Activated CD4-positive, alpha-beta memory T cell treated with anti-CD3 and anti-CD28 coated beads for 36 hours (primary cell): ENCODE measurements at regions of chr12 and their contacts with region 1.

Region 1: GRCh38 chr12:47812797-47813510 is 6.7 kb downstream of the HDAC7 start:
- DNase-seq: peak; percentile 98
- H3K4me3 Mint-ChIP-seq: peak overlapping the region; percentile 92
- H3K27ac Mint-ChIP-seq: peak overlapping the region; percentile 99
- H3K4me1 Mint-ChIP-seq: peaks cover 82% of the 10 kb centered on the region
- H3K27me3 Mint-ChIP-seq: no peaks in the 10 kb centered on the region

Region 2: DNA sequence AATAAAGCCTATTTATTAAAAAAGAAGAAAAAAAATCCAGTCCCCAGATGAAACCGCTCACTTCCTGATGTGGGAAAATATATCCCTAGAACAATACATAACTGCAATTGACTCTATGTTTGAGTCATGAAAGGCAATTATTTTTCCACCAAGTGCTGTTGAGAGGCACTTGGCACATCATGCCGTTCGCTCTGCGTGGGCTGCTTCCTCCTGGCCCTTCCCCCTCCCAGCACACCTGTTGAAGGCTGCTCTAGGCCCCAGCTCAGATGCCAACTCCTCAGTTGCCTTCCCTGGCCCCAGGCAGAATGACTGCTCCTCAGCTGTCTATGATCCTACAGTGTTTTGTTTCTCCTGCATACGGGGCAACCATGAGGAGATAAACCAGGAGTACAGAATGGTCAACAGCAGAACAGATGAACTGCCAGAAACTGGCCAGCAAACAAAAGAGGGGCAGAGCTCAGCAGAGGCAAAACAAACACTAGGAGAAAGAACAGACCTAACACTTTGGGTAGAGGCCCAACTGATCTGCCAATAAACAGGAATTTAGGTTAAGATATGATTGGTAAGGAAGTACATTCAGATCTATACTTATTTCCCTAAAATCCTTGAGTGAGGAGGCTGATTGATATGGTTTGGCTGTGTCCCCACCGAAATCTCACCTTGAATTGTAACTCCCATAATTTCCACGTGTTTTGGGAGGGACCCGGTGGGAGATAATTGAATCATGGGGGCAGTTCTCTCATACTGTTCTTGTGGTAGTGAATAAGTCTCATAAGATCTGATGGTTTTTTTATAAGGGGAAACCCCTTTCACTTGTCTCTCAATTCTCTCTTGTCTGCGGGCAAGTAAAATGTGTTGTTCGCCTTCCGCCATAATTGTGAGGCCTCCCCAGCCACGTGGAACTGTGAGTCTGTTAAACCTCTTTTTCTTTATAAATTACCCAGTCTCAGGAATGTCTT is 1602.8 kb before region 1 on chr12:
- CTCF ChIA-PET with region 1: no interaction called
- POLR2A ChIA-PET with region 1: no interaction called
- intact Hi-C with region 1: loop called (anchors 10 kb)
- DNase-seq: peak; percentile 82
- H3K4me3 Mint-ChIP-seq: peak overlapping the region; percentile 40
- H3K27ac Mint-ChIP-seq: peak overlapping the region; percentile 98
- H3K4me1 Mint-ChIP-seq: peaks cover 74% of the 10 kb centered on the region
- H3K27me3 Mint-ChIP-seq: no peaks in the 10 kb centered on the region

Region 3: GRCh38 chr12:47705566-47706425 is 107.2 kb before region 1 on chr12 and contains the start of gene RPAP3:
- CTCF ChIA-PET with region 1: interaction called, 5 read pairs
- POLR2A ChIA-PET with region 1: interaction called, 10 read pairs
- intact Hi-C with region 1: loop called (anchors 1 kb)
- DNase-seq: peak; percentile 99
- H3K4me3 Mint-ChIP-seq: peak within 1 kb of the TSS; percentile 96
- H3K27ac Mint-ChIP-seq: peak within 1 kb of the TSS; percentile 95
- H3K4me1 Mint-ChIP-seq: peaks cover 50% of the 10 kb centered on the region
- H3K27me3 Mint-ChIP-seq: no peaks in the 10 kb centered on the region
- total RNA-seq, gene RPAP3: 49.4 to 50.2 TPM

Region 4: DNA sequence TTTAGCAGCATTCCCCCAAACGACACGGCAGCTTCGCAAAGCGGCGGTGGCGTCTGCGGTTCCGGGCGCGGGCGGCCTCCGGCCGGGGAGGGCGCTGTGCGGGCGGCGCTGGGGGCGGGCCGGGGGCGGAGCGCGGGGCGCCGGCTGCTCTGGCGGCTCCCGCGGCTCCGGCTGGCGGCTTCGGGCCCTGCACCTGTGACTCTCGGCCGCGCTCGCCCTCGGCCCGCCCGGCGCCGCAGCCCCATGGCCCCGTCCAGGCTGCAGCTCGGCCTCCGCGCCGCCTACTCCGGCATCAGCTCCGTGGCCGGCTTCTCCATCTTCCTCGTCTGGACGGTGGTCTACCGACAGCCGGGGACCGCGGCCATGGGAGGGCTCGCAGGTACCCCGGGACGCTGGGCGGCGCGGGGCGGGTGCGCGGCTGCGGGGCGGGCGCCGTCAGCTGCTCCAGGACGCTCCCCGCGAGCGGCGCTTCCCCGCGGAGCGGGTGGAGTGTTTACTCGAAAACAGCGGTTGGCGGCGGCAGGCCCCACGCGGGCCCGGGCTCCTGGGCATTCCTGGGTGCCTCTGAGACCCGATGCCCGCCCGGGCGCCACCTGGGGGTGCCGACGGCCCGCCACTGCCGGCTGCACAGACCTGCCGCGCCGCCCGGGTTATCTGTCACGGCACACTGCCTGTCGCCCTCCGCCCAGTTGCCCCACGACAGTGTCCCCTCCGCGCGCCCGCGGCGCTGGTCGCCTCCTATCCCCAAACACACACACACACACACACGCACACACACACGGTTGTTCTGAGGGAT is 39.7 kb before region 1 on chr12 and contains the start of gene SLC48A1:
- CTCF ChIA-PET with region 1: interaction called, 12 read pairs
- POLR2A ChIA-PET with region 1: interaction called, 7 read pairs
- intact Hi-C with region 1: loop called (anchors 2 kb)
- DNase-seq: peak; percentile 80
- H3K4me3 Mint-ChIP-seq: peak within 1 kb of the TSS; percentile 85
- H3K27ac Mint-ChIP-seq: no peak within 1 kb of the TSS
- H3K4me1 Mint-ChIP-seq: peaks cover 18% of the 10 kb centered on the region
- H3K27me3 Mint-ChIP-seq: no peaks in the 10 kb centered on the region
- total RNA-seq, gene SLC48A1: 13.7 to 16.2 TPM

Region 5: GRCh38 chr12:47828608-47829536 is 15.9 kb after region 1 on chr12:
- CTCF ChIA-PET with region 1: interaction called, 795 read pairs
- POLR2A ChIA-PET with region 1: interaction called, 540 read pairs
- intact Hi-C with region 1: loop called (anchors 1 kb)
- DNase-seq: peak; percentile 55
- H3K4me3 Mint-ChIP-seq: peak overlapping the region; percentile 60
- H3K27ac Mint-ChIP-seq: peak overlapping the region; percentile 81
- H3K4me1 Mint-ChIP-seq: peaks cover 89% of the 10 kb centered on the region
- H3K27me3 Mint-ChIP-seq: no peaks in the 10 kb centered on the region

Region 6: GRCh38 chr12:47904713-47905310 is 91.9 kb after region 1 on chr12 and contains the start of gene VDR:
- CTCF ChIA-PET with region 1: interaction called, 7 read pairs
- POLR2A ChIA-PET with region 1: interaction called, 5 read pairs
- intact Hi-C with region 1: loop called (anchors 2 kb)
- DNase-seq: peak; percentile 87
- H3K4me3 Mint-ChIP-seq: peak within 1 kb of the TSS; percentile 97
- H3K27ac Mint-ChIP-seq: peak within 1 kb of the TSS; percentile 93
- H3K4me1 Mint-ChIP-seq: peaks cover 43% of the 10 kb centered on the region
- H3K27me3 Mint-ChIP-seq: peaks cover 7% of the 10 kb centered on the region
- total RNA-seq, gene VDR: 156 TPM

Region 7: GRCh38 chr12:48092611-48093010 is 279.7 kb after region 1 on chr12:
- CTCF ChIA-PET with region 1: no interaction called
- POLR2A ChIA-PET with region 1: no interaction called
- intact Hi-C with region 1: no loop called
- DNase-seq: no peak
- H3K4me3 Mint-ChIP-seq: no peak overlapping the region
- H3K27ac Mint-ChIP-seq: no peak overlapping the region
- H3K4me1 Mint-ChIP-seq: no peaks in the 10 kb centered on the region
- H3K27me3 Mint-ChIP-seq: no peaks in the 10 kb centered on the region